ENCODE measurements at regions of chr18 and their contacts with region 1.

Region 1: DNA sequence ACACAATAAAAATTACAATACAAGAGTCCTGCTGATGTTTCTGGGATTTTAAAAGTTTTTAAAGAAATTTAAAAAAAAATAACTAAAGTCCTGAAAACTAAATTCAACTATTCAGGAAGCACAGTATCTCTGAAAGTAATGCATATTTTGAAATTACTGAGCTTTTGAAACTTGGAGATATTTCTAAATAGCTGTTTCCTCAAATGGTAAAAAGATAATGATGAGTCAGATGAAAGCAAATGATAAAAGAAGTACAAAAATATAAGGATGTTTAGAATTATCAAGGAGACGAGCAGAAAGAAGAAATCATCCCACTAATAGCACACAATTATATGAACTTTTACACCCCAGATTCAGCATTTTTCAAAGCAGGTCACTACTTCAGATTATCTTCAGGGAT is 90.2 kb upstream of the SLC25A52 start:
- DNase-seq: no peak
- ATAC-seq: no peak
- H3K4me3 ChIP-seq: no peak overlapping the region
- H3K4me3 Mint-ChIP-seq: no peak overlapping the region
- H3K27ac ChIP-seq: no peak overlapping the region
- H3K27ac Mint-ChIP-seq: no peak overlapping the region
- H3K4me1 ChIP-seq: no peaks in the 10 kb centered on the region
- H3K4me1 Mint-ChIP-seq: no peaks in the 10 kb centered on the region
- H3K27me3 ChIP-seq: no peaks in the 10 kb centered on the region
- H3K27me3 Mint-ChIP-seq: no peaks in the 10 kb centered on the region
- CTCF ChIP-seq: no peak

Region 2: GRCh38 chr18:32114293-32114942 is 263.6 kb after region 1 on chr18:
- CTCF ChIA-PET with region 1: no interaction called
- POLR2A ChIA-PET with region 1: no interaction called
- intact Hi-C with region 1: loop called in 1 of 2 experiments (anchors 5 kb)
- DNase-seq: no peak
- ATAC-seq: no peak
- H3K4me3 ChIP-seq: no peak overlapping the region
- H3K4me3 Mint-ChIP-seq: no peak overlapping the region
- H3K27ac ChIP-seq: no peak overlapping the region
- H3K27ac Mint-ChIP-seq: no peak overlapping the region
- H3K4me1 ChIP-seq: peaks cover 12% of the 10 kb centered on the region
- H3K4me1 Mint-ChIP-seq: peaks cover 61% of the 10 kb centered on the region
- H3K27me3 ChIP-seq: no peaks in the 10 kb centered on the region
- H3K27me3 Mint-ChIP-seq: no peaks in the 10 kb centered on the region
- CTCF ChIP-seq: no peak